Breast epithelium (tissue), 4 donors: ENCODE measurements at regions of chr20 and their contacts with region 1.

Region 1: GRCh38 chr20:40414843-40415615 is 274.0 kb downstream of the MAFB start:
- DNase-seq: peak; percentile 57 to 76
- H3K4me3 ChIP-seq: no peak overlapping the region
- H3K27ac ChIP-seq: peak overlapping the region; percentile 33 to 51
- H3K4me1 ChIP-seq: no peaks in the 10 kb centered on the region
- H3K27me3 ChIP-seq: no peaks in the 10 kb centered on the region
- CTCF ChIP-seq: peak in 1 of 3 donors; percentile 11
- POLR2A ChIP-seq: no peak

Region 2: DNA sequence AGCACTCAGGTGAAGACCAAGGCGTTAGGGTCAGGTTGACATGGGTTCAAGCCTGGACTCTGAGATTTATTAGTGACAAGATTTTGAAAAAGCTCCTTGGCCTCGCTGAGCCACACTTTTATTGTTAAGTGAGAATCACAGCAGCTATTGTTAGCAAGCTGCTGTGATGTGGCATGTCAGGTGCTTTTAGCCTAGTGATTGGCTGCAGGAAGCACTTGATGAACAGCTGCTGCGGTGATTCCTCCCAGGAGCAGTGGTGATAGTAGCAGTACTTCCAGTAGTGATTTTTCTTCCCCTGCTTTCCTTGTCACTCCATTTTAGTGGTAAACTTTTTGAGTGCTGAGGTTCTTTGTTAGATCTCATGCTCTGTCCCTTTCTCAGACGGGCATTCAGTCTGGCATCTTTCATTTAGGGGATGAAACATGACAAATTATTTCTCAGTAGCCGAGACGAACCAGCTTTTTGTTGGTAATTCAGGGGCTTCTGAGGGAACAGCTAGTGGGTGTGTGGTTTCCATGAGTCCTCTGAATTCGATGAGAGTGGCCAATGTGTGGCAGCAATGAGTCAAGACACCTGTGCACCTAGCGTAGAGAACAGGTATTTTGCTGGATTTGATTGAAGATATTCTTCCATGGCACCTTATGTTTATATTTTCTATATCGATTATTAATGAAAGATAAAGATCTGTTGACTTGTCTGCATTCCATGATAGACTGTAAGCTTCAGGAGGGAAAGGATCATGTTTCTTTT is 756.2 kb before region 1 on chr20:
- intact Hi-C with region 1: loop called (anchors 5 kb)
- DNase-seq: no peak
- H3K4me3 ChIP-seq: no peak overlapping the region
- H3K27ac ChIP-seq: no peak overlapping the region
- H3K4me1 ChIP-seq: no peaks in the 10 kb centered on the region
- H3K27me3 ChIP-seq: no peaks in the 10 kb centered on the region
- CTCF ChIP-seq: no peak
- POLR2A ChIP-seq: no peak

Region 3: DNA sequence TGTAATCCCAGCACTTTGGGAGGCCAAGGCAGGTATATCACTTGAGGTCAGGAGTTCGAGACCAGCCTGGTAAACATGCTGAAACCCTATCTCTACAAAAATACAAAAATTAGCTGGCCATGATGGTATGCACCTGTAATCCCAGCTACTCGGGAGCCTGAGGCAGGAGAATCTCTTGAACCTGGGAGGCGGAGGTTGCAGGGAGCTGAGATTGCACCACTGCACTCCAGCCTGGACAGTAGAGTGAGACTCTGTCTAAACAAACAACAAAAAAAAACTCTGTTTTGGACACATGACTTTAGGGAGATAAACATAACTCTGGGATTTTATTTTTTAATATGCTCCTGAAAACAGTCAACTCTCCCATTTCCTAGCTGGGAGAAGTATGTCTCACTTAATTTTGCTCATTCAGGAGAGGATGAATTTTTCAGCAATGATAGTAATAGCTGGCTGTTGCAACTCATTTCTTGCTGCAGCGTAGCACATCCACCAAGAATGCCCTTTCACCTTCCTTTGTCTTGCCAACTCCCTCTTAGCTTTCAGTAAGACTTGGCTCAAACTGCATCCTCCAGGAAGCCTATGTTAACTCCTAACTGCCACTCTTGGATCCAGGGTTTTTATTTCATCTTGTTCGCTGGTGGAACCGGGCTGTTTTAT is 637.8 kb after region 1 on chr20:
- intact Hi-C with region 1: loop called (anchors 5 kb)
- DNase-seq: no peak
- H3K4me3 ChIP-seq: no peak overlapping the region
- H3K27ac ChIP-seq: peak overlapping the region in 1 of 2 donors; percentile 38
- H3K4me1 ChIP-seq: peaks cover 0 to 51% of the 10 kb centered on the region in 2 donors
- H3K27me3 ChIP-seq: no peaks in the 10 kb centered on the region
- CTCF ChIP-seq: no peak
- POLR2A ChIP-seq: no peak